ENCODE measurements at regions of chr5 and their contacts with region 1.

Region 1: GRCh38 chr5:43066799-43067741 is 27.0 kb upstream of the ANXA2R start:
- DNase-seq: peak; percentile 79
- H3K4me3 ChIP-seq: peak overlapping the region; percentile 92
- H3K27ac ChIP-seq: peak overlapping the region; percentile 96
- H3K27me3 ChIP-seq: no peaks in the 10 kb centered on the region
- CTCF ChIP-seq: no peak

Region 2: GRCh38 chr5:43008369-43009153 is 58.5 kb before region 1 on chr5:
- CTCF ChIA-PET with region 1: interaction called, 3 read pairs
- POLR2A ChIA-PET with region 1: interaction called, 15 read pairs
- DNase-seq: peak; percentile 79
- H3K4me3 ChIP-seq: peak overlapping the region; percentile 61
- H3K27ac ChIP-seq: peak overlapping the region; percentile 98
- H3K27me3 ChIP-seq: no peaks in the 10 kb centered on the region
- CTCF ChIP-seq: 0 out of 2 replicates have a peak, but pooled peaks have one; percentile 7

Region 3: GRCh38 chr5:43040287-43041098 is 26.6 kb before region 1 on chr5 and contains the start of gene ANXA2R:
- CTCF ChIA-PET with region 1: interaction called, 23 read pairs
- POLR2A ChIA-PET with region 1: interaction called, 20 read pairs
- DNase-seq: peak; percentile 91
- H3K4me3 ChIP-seq: peak within 1 kb of the TSS; percentile 83
- H3K27ac ChIP-seq: peak within 1 kb of the TSS; percentile 98
- H3K27me3 ChIP-seq: no peaks in the 10 kb centered on the region
- CTCF ChIP-seq: peak; percentile 90
- polyA plus RNA-seq, gene ANXA2R: 3.7 and 4.9 TPM in 2 replicates

Region 4: GRCh38 chr5:43049236-43049635 is 17.8 kb before region 1 on chr5:
- CTCF ChIA-PET with region 1: interaction called, 12 read pairs
- POLR2A ChIA-PET with region 1: interaction called, 5 read pairs
- DNase-seq: no peak
- H3K4me3 ChIP-seq: no peak overlapping the region
- H3K27ac ChIP-seq: no peak overlapping the region
- H3K27me3 ChIP-seq: no peaks in the 10 kb centered on the region
- CTCF ChIP-seq: no peak

Region 5: GRCh38 chr5:43120720-43121564 is 53.9 kb after region 1 on chr5 and contains the start of gene ZNF131:
- CTCF ChIA-PET with region 1: no interaction called
- POLR2A ChIA-PET with region 1: interaction called, 16 read pairs
- DNase-seq: peak; percentile 91
- H3K4me3 ChIP-seq: peak within 1 kb of the TSS; percentile 79
- H3K27ac ChIP-seq: peak within 1 kb of the TSS; percentile 91
- H3K27me3 ChIP-seq: no peaks in the 10 kb centered on the region
- CTCF ChIP-seq: no peak
- polyA plus RNA-seq, gene ZNF131: 30.4 and 42.5 TPM in 2 replicates

Measured in AG04450 (cell line).